OCI-LY7 (cell line): ENCODE measurements at regions of chr17 and their contacts with region 1.

Region 1: DNA sequence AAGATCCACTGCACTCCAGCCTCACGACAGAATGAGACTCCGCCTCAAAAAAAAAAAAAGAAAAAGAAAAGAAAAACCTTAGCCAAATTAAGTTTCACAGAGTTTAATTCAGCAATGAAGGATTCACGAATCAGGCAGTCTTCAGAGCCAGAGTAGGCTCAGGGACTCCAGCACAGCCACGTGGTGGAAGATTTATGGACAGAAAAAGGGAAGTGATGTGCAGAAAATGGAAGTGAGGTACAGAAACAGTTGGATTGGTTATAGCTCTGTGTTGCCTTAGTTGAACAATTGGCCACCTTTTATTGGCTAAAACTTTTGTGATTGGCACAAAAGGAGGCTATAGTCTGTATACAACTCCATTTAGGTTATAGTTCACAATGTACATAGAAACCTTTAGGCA is 256.6 kb downstream of the HS3ST3B1 start:
- DNase-seq: peak; percentile 63
- H3K4me3 ChIP-seq: no peak overlapping the region
- H3K27ac ChIP-seq: peak overlapping the region; percentile 96
- H3K4me1 ChIP-seq: peaks cover 70% of the 10 kb centered on the region
- CTCF ChIP-seq: no peak

Region 2: GRCh38 chr17:14359163-14360020 is 198.1 kb before region 1 on chr17:
- CTCF ChIA-PET with region 1: no interaction called
- POLR2A ChIA-PET with region 1: interaction called, 4 read pairs
- intact Hi-C with region 1: loop called (anchors 5 kb)
- DNase-seq: peak; percentile 93
- H3K4me3 ChIP-seq: peak overlapping the region; percentile 35
- H3K27ac ChIP-seq: peak overlapping the region; percentile 78
- H3K4me1 ChIP-seq: peaks cover 60% of the 10 kb centered on the region
- CTCF ChIP-seq: peak; percentile 73

Region 3: GRCh38 chr17:14622615-14623101 is 65.2 kb after region 1 on chr17:
- CTCF ChIA-PET with region 1: interaction called, 5 read pairs
- POLR2A ChIA-PET with region 1: interaction called, 3 read pairs
- intact Hi-C with region 1: loop called (anchors 5 kb)
- DNase-seq: peak; percentile 25
- H3K4me3 ChIP-seq: peak overlapping the region; percentile 48
- H3K27ac ChIP-seq: peak overlapping the region; percentile 99
- H3K4me1 ChIP-seq: peaks cover 59% of the 10 kb centered on the region
- CTCF ChIP-seq: no peak

Region 4: DNA sequence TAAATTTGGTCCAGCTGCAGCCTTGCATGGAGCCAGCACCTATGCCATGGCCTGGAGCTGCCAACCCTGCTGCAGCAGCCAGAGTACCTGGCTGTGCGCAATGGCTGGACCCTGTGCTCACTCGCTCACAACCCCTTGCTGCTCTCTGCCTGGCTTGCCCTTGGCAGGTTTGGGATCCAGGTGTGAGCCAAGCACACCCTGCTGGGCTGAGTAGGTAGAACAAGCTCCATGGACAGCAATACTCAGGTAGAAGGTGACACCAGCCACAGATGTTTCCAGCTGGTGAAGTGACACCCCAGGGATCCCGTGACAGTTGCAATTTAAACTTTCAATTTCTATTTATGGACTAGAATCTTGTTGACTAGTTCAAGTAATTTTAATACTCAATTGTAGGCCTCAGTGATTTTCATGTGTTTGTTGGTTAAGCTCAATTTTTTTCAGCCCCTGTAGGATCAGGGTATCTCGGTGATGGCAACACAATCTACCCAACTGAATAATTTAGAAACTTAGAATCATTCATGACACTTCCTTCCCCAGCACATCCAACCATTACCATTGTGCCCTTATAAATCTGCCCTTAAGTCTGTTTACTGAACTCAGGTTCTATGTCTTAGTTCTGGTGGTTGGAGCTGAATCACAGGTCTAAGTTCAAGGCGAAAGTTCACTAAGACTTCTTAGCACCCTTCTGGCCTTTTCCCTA is 227.7 kb after region 1 on chr17:
- CTCF ChIA-PET with region 1: no interaction called
- POLR2A ChIA-PET with region 1: no interaction called
- intact Hi-C with region 1: loop called (anchors 5 kb)
- DNase-seq: peak; percentile 65
- H3K4me3 ChIP-seq: no peak overlapping the region
- H3K27ac ChIP-seq: peak overlapping the region; percentile 68
- H3K4me1 ChIP-seq: peaks cover 32% of the 10 kb centered on the region
- CTCF ChIP-seq: peak; percentile 61